K562 (cell line): ENCODE measurements at regions of chr6 and their contacts with region 1.

Region 1: GRCh38 chr6:13336553-13336952 is 8.2 kb upstream of the TBC1D7 start:
- DNase-seq: peak; percentile 79 to 84 (median 82)
- ATAC-seq: peak; percentile 89
- H3K4me3 ChIP-seq: no peak overlapping the region
- H3K27ac ChIP-seq: no peak overlapping the region
- H3K4me1 ChIP-seq: peaks cover 9% of the 10 kb centered on the region in 2 experiments
- H3K27me3 ChIP-seq: peaks cover 0 to 3% of the 10 kb centered on the region in 2 experiments; a peak in 2 of 5 replicates
- CTCF ChIP-seq: peak; percentile 92 to 94 (median 94)
- EP300 ChIP-seq: 0 out of 2 replicates have a peak, but pooled peaks have one; percentile 4
- POLR2A ChIP-seq: no peak
- RAD21 ChIP-seq: peak; percentile 86 to 87

Region 2: GRCh38 chr6:13105139-13105538 is 231.4 kb before region 1 on chr6:
- CTCF ChIA-PET with region 1: no interaction called
- POLR2A ChIA-PET with region 1: no interaction called
- in situ Hi-C with region 1: no loop called
- intact Hi-C with region 1: no loop called
- DNase-seq: no peak
- ATAC-seq: no peak
- H3K4me3 ChIP-seq: no peak overlapping the region
- H3K27ac ChIP-seq: no peak overlapping the region
- H3K4me1 ChIP-seq: no peaks in the 10 kb centered on the region
- H3K27me3 ChIP-seq: no peaks in the 10 kb centered on the region
- CTCF ChIP-seq: no peak
- EP300 ChIP-seq: no peak
- POLR2A ChIP-seq: no peak
- RAD21 ChIP-seq: no peak

Region 3: DNA sequence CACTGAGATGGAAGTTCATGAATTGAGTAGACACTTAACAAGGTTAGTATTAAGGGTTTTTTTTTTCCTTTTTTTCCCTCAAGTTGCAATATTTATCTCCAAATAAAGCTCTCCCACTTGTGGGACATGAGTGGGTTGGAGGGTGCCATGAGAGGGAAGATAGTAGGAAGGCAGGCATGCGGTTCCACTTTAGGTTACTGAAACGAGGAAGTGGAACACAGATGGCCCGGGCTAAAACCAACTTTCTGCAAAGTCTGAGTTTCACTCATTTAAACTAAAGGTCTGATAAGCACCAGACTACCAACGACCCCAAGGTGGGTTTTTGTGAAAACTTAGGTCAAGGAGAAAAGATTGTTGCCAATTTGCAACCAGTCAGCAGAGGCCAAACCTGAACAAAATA is 50.4 kb before region 1 on chr6:
- CTCF ChIA-PET with region 1: no interaction called
- POLR2A ChIA-PET with region 1: no interaction called
- in situ Hi-C with region 1: no loop called
- intact Hi-C with region 1: no loop called
- DNase-seq: no peak
- ATAC-seq: no peak
- H3K4me3 ChIP-seq: no peak overlapping the region
- H3K27ac ChIP-seq: no peak overlapping the region
- H3K4me1 ChIP-seq: peaks cover 7 to 17% of the 10 kb centered on the region in 2 experiments; a peak in 4 of 5 replicates
- H3K27me3 ChIP-seq: no peaks in the 10 kb centered on the region
- CTCF ChIP-seq: no peak
- EP300 ChIP-seq: no peak
- POLR2A ChIP-seq: no peak
- RAD21 ChIP-seq: no peak

Region 4: GRCh38 chr6:13380761-13381160 is 44.2 kb after region 1 on chr6:
- CTCF ChIA-PET with region 1: no interaction called
- POLR2A ChIA-PET with region 1: no interaction called
- in situ Hi-C with region 1: no loop called
- intact Hi-C with region 1: loop called (anchors 2 kb)
- DNase-seq: peak; percentile 53 to 90 (median 72)
- ATAC-seq: peak; percentile 94
- H3K4me3 ChIP-seq: no peak overlapping the region
- H3K27ac ChIP-seq: no peak overlapping the region
- H3K4me1 ChIP-seq: peaks cover 4 to 14% of the 10 kb centered on the region in 2 experiments; a peak in 4 of 5 replicates
- H3K27me3 ChIP-seq: peaks cover 0 to 11% of the 10 kb centered on the region in 2 experiments; a peak in 1 of 5 replicates
- CTCF ChIP-seq: no peak
- EP300 ChIP-seq: peak; percentile 87
- POLR2A ChIP-seq: no peak
- RAD21 ChIP-seq: peak; percentile 11 to 30; a peak in 2 of 4 replicates

Region 5: GRCh38 chr6:13454286-13455221 is 118.0 kb after region 1 on chr6:
- CTCF ChIA-PET with region 1: no interaction called
- POLR2A ChIA-PET with region 1: no interaction called
- in situ Hi-C with region 1: no loop called
- intact Hi-C with region 1: loop called (anchors 1 kb)
- DNase-seq: peak in 1 of 4 experiments; percentile 38
- ATAC-seq: peak; percentile 80
- H3K4me3 ChIP-seq: no peak overlapping the region
- H3K27ac ChIP-seq: no peak overlapping the region
- H3K4me1 ChIP-seq: peaks cover 6 to 11% of the 10 kb centered on the region in 2 experiments; a peak in 4 of 5 replicates
- H3K27me3 ChIP-seq: no peaks in the 10 kb centered on the region; a peak in 1 of 5 replicates
- CTCF ChIP-seq: peak; percentile 28 to 45 (median 42); a peak in 3 of 6 replicates
- EP300 ChIP-seq: no peak
- POLR2A ChIP-seq: no peak
- RAD21 ChIP-seq: peak; percentile 69 to 72

Region 6: DNA sequence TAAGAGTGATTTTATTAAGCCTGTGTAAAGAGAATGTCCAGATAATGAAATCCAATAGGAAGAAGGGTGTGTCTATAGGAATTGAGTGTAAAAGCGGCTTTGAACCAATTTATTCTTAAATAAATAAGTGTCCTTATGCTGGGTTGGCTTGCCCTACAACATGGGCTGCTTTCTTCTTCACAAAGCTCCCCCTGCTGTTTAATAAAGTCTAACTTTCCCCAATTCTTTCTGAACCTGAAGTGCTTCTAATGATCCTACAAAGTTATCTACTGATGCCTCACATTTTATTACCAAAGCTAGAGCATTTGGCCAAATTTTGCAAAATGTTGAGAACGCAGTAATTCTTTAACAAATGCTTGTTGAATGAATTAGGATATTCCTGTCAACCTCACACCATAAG is 201.5 kb after region 1 on chr6:
- CTCF ChIA-PET with region 1: interaction called, 9 read pairs
- POLR2A ChIA-PET with region 1: no interaction called
- in situ Hi-C with region 1: no loop called
- intact Hi-C with region 1: loop called (anchors 1 kb)
- DNase-seq: peak; percentile 33 to 50 (median 46)
- ATAC-seq: peak; percentile 74
- H3K4me3 ChIP-seq: no peak overlapping the region
- H3K27ac ChIP-seq: no peak overlapping the region
- H3K4me1 ChIP-seq: peaks cover 0 to 4% of the 10 kb centered on the region in 2 experiments; a peak in 1 of 5 replicates
- H3K27me3 ChIP-seq: peaks cover 9 to 16% of the 10 kb centered on the region in 2 experiments; a peak in 3 of 5 replicates
- CTCF ChIP-seq: peak; percentile 32 to 59 (median 39); a peak in 3 of 6 replicates
- EP300 ChIP-seq: no peak
- POLR2A ChIP-seq: no peak
- RAD21 ChIP-seq: peak; percentile 77 to 82

Region 7: GRCh38 chr6:13767121-13767808 is 430.7 kb after region 1 on chr6:
- CTCF ChIA-PET with region 1: interaction called, 3 read pairs
- POLR2A ChIA-PET with region 1: no interaction called
- in situ Hi-C with region 1: no loop called
- intact Hi-C with region 1: loop called (anchors 10 kb)
- DNase-seq: peak in 1 of 4 experiments; percentile 34
- ATAC-seq: peak; percentile 74
- H3K4me3 ChIP-seq: no peak overlapping the region
- H3K27ac ChIP-seq: no peak overlapping the region
- H3K4me1 ChIP-seq: peaks cover 2 to 9% of the 10 kb centered on the region in 2 experiments; a peak in 2 of 5 replicates
- H3K27me3 ChIP-seq: no peaks in the 10 kb centered on the region
- CTCF ChIP-seq: peak in 1 of 3 experiments; percentile 42; a peak in 3 of 6 replicates
- EP300 ChIP-seq: no peak
- POLR2A ChIP-seq: no peak
- RAD21 ChIP-seq: peak; percentile 20 to 58; a peak in 2 of 4 replicates